Activated naive CD4-positive, alpha-beta T cell treated with anti-CD3 and anti-CD28 coated beads for 36 hours (primary cell): ENCODE measurements at regions of chr9 and their contacts with region 1.

Region 1: GRCh38 chr9:131046581-131047202 is 37.7 kb downstream of the LAMC3 start:
- DNase-seq: peak; percentile 78
- H3K4me3 Mint-ChIP-seq: peak overlapping the region; percentile 16
- H3K27ac Mint-ChIP-seq: no peak overlapping the region
- H3K4me1 Mint-ChIP-seq: peaks cover 8% of the 10 kb centered on the region
- H3K27me3 Mint-ChIP-seq: peaks cover 4% of the 10 kb centered on the region

Region 2: DNA sequence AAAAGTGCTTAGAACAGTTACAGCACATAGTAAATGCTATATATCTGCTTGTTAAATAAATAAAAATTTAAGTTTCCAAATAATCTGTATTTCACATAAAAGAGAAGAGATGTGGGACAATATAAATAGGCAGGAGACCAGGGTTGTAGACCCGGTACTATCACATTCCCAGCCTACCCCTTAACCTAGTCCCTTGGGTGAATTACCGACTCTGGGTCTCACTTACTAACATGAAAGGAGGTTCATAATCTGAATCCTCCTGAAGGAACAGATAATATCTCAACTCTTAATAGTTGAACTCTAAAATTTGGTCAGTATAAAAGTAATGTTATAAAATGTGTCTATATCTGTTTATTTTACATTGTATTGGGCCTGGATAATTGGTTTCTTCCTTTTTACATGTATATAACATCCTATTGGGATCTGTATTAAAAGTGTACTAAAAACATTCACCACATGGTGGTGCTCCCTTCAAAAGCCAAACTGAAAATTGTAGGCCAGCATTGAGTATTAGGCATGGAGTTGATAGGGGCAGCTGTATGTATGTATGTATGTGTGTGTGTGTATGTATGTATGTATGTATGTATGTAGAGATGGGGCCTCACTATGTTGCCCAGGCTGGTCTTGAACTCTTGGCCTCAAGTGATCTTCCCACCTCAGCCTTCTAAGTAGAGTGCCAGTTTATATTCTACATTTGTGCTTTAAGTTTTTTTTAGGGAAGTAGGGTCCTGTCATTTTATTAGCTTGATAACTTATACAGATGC is 275.8 kb before region 1 on chr9:
- CTCF ChIA-PET with region 1: interaction called, 3 read pairs
- intact Hi-C with region 1: loop called (anchors 1 kb)
- DNase-seq: peak; percentile 23
- H3K4me3 Mint-ChIP-seq: no peak overlapping the region
- H3K27ac Mint-ChIP-seq: no peak overlapping the region
- H3K4me1 Mint-ChIP-seq: peaks cover 26% of the 10 kb centered on the region
- H3K27me3 Mint-ChIP-seq: no peaks in the 10 kb centered on the region

Region 3: DNA sequence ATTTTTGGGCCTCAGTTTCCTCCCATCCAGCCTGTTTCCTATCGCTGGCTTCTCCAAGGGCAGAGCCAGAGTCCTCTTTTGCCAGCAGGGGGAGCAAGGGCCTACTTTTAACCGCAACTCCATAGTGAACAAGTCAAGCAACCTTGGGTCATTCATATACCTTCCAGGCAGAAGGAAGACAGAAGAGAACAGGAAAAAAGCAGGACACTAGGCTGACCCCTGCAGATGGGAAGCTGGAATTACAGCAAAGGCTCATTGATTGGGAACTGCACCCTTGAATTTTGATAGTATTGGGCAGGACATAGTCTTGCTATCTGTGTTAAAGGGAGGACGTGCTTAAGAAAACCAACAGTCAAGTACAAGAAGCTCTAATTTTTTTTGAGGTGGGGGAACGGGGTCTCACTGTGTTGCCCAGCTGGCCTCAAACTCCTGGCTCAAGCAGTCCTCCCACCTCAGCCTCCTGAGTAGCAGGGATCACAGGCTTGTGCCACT is 180.2 kb before region 1 on chr9:
- CTCF ChIA-PET with region 1: interaction called, 54 read pairs
- intact Hi-C with region 1: loop called (anchors 1 kb)
- DNase-seq: peak; percentile 79
- H3K4me3 Mint-ChIP-seq: no peak overlapping the region
- H3K27ac Mint-ChIP-seq: no peak overlapping the region
- H3K4me1 Mint-ChIP-seq: no peaks in the 10 kb centered on the region
- H3K27me3 Mint-ChIP-seq: no peaks in the 10 kb centered on the region

Region 4: GRCh38 chr9:130940693-130941576 is 105.8 kb before region 1 on chr9:
- CTCF ChIA-PET with region 1: interaction called, 4 read pairs
- intact Hi-C with region 1: loop called (anchors 1 kb)
- DNase-seq: peak; percentile 87
- H3K4me3 Mint-ChIP-seq: no peak overlapping the region
- H3K27ac Mint-ChIP-seq: no peak overlapping the region
- H3K4me1 Mint-ChIP-seq: peaks cover 10% of the 10 kb centered on the region
- H3K27me3 Mint-ChIP-seq: peaks cover 52% of the 10 kb centered on the region

Region 5: GRCh38 chr9:131008909-131009618 is 37.6 kb before region 1 on chr9 and contains the start of gene LAMC3:
- CTCF ChIA-PET with region 1: interaction called, 5 read pairs
- intact Hi-C with region 1: loop called (anchors 2 kb)
- DNase-seq: no peak
- H3K4me3 Mint-ChIP-seq: peak within 1 kb of the TSS; percentile 15
- H3K27ac Mint-ChIP-seq: no peak within 1 kb of the TSS
- H3K4me1 Mint-ChIP-seq: peaks cover 3% of the 10 kb centered on the region
- H3K27me3 Mint-ChIP-seq: peaks cover 23% of the 10 kb centered on the region
- total RNA-seq, gene LAMC3: 0.69 to 0.98 TPM